CD4-positive, alpha-beta T cell (primary cell): ENCODE measurements at regions of chr6 and their contacts with region 1.

Region 1: DNA sequence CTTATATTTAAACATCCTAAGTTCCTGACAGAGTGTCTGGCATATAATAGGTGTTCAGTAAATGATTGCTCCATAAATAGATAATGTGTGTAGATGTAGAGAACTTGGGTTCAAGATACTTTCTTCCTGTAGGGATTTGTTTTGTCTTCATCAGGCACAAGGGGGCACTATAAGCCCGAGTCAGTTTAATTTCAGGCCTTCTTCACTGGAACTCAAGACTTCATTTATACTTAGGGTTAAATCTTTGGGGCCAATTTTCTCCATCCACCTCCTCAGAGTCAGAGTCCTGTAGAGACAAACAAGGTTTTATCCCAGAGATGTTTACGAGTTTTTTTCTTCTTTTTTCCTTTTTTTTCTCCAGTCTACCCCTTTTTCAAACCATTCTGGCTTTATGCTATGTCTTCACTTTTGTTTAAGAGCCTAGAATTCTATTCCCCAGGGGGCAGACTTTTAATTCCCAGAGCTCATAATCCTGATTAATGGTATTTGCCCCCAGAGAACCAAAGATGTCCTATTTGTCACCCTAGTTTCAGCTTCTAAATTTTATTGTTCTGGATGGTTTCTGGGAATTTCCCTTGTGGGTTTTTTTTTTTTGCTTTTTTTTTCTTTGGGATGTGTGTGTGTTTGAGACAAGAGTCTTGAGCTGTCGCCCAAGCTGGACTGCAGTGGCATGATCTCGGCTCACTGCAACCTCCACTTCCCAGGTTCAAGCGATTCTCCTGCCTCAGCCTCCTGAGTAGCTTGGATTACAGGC is 88.4 kb downstream of the HFE start:
- DNase-seq: peak in 11 of 14 experiments; percentile 13 to 85 (median 54)
- ATAC-seq: no peak
- H3K4me3 ChIP-seq: no peak overlapping the region
- H3K4me3 Mint-ChIP-seq: peak overlapping the region; percentile 83
- H3K27ac ChIP-seq: peak overlapping the region in 1 of 2 donors; percentile 41
- H3K27ac Mint-ChIP-seq: peak overlapping the region; percentile 93
- H3K4me1 ChIP-seq: peaks cover 17% of the 10 kb centered on the region
- H3K4me1 Mint-ChIP-seq: peaks cover 53% of the 10 kb centered on the region
- H3K27me3 ChIP-seq: no peaks in the 10 kb centered on the region
- H3K27me3 Mint-ChIP-seq: no peaks in the 10 kb centered on the region
- CTCF ChIP-seq: peak; percentile 87

Region 2: GRCh38 chr6:26054857-26055669 is 120.5 kb before region 1 on chr6:
- CTCF ChIA-PET with region 1: no interaction called
- POLR2A ChIA-PET with region 1: interaction called, 18 read pairs
- intact Hi-C with region 1: no loop called
- DNase-seq: peak; percentile 68 to 97 (median 80)
- ATAC-seq: peak; percentile 71
- H3K4me3 ChIP-seq: peak overlapping the region; percentile 89
- H3K4me3 Mint-ChIP-seq: peak overlapping the region; percentile 97
- H3K27ac ChIP-seq: peak overlapping the region; percentile 81
- H3K27ac Mint-ChIP-seq: peak overlapping the region; percentile 96
- H3K4me1 ChIP-seq: peaks cover 29% of the 10 kb centered on the region
- H3K4me1 Mint-ChIP-seq: peaks cover 28% of the 10 kb centered on the region
- H3K27me3 ChIP-seq: no peaks in the 10 kb centered on the region
- H3K27me3 Mint-ChIP-seq: no peaks in the 10 kb centered on the region
- CTCF ChIP-seq: no peak

Region 3: DNA sequence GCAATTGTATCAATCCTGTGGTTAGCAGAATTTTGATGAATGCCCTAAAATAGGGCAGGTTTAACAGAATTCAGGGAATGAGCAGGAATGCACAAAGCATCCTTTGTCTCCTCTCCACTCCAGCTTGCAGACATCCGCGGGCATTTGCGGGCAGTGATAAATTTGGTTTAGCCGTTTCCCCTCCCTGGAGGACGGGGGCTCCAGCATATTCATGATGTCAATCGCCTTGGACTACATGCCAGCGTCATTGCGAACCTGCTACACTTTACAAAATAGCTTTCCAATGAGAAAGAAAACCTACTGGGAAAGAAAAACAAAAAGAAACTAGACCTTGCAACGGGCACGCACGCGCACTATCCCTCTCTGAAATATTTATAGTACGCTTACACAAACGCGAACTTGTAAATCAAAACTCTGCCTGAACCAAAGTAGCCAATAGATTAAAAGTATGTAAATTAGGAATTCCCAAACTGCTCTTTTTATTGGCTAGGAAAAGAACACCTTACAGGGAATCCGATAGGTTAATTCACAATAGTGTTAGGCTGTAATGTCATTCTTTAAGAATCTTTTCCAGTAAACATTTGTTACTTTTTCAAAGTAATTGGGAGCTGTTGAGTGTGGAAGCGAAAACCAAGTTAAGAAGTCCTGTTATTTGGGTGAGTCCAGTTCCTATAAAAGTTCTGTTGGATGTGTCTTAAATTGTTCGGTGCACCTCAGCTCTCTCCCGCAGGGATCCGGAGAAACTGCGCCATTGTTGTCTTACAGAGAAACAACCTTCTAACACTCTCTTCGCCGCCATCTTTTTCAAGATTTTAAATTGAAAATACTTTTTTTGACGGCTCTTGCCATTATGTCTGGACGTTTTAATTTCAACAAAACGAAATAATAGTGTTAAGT is 48.3 kb after region 1 on chr6:
- CTCF ChIA-PET with region 1: interaction called, 3 read pairs
- POLR2A ChIA-PET with region 1: interaction called, 27 read pairs
- intact Hi-C with region 1: no loop called
- DNase-seq: peak in 13 of 14 experiments; percentile 45 to 93 (median 60)
- ATAC-seq: peak; percentile 87
- H3K4me3 ChIP-seq: peak overlapping the region; percentile 68
- H3K4me3 Mint-ChIP-seq: no peak overlapping the region
- H3K27ac ChIP-seq: peak overlapping the region; percentile 72 to 82
- H3K27ac Mint-ChIP-seq: no peak overlapping the region
- H3K4me1 ChIP-seq: peaks cover 18% of the 10 kb centered on the region
- H3K4me1 Mint-ChIP-seq: peaks cover 5% of the 10 kb centered on the region
- H3K27me3 ChIP-seq: no peaks in the 10 kb centered on the region
- H3K27me3 Mint-ChIP-seq: no peaks in the 10 kb centered on the region
- CTCF ChIP-seq: no peak

Region 4: GRCh38 chr6:26532699-26533531 is 357.3 kb after region 1 on chr6:
- CTCF ChIA-PET with region 1: no interaction called
- POLR2A ChIA-PET with region 1: interaction called, 18 read pairs
- intact Hi-C with region 1: no loop called
- DNase-seq: peak; percentile 79 to 96 (median 90)
- ATAC-seq: peak; percentile 36
- H3K4me3 ChIP-seq: peak overlapping the region; percentile 72
- H3K4me3 Mint-ChIP-seq: peak overlapping the region; percentile 98
- H3K27ac ChIP-seq: peak overlapping the region; percentile 20 to 59
- H3K27ac Mint-ChIP-seq: peak overlapping the region; percentile 97
- H3K4me1 ChIP-seq: peaks cover 28% of the 10 kb centered on the region
- H3K4me1 Mint-ChIP-seq: peaks cover 50% of the 10 kb centered on the region
- H3K27me3 ChIP-seq: no peaks in the 10 kb centered on the region
- H3K27me3 Mint-ChIP-seq: peaks cover 16% of the 10 kb centered on the region
- CTCF ChIP-seq: no peak

Region 5: GRCh38 chr6:26596579-26597388 is 421.2 kb after region 1 on chr6 and contains the start of gene ABT1:
- CTCF ChIA-PET with region 1: interaction called, 5 read pairs
- POLR2A ChIA-PET with region 1: interaction called, 9 read pairs
- intact Hi-C with region 1: loop called (anchors 2 to 10 kb)
- DNase-seq: peak; percentile 92 to 98 (median 96)
- ATAC-seq: peak; percentile 79
- H3K4me3 ChIP-seq: peak within 1 kb of the TSS; percentile 98
- H3K4me3 Mint-ChIP-seq: no peak within 1 kb of the TSS
- H3K27ac ChIP-seq: peak within 1 kb of the TSS; percentile 86 to 95
- H3K27ac Mint-ChIP-seq: no peak within 1 kb of the TSS
- H3K4me1 ChIP-seq: peaks cover 31% of the 10 kb centered on the region
- H3K4me1 Mint-ChIP-seq: peaks cover 23% of the 10 kb centered on the region
- H3K27me3 ChIP-seq: peaks cover 8 to 28% of the 10 kb centered on the region in 2 experiments
- H3K27me3 Mint-ChIP-seq: peaks cover 30% of the 10 kb centered on the region
- CTCF ChIP-seq: no peak
- total RNA-seq, gene ABT1: 39.8 to 40.4 TPM